HCT116 (cell line): ENCODE measurements at regions of chr2 and their contacts with region 1.

Region 1: GRCh38 chr2:70104231-70105111 is 17.2 kb downstream of the PCBP1 start:
- DNase-seq: no peak
- ATAC-seq: no peak
- H3K4me3 ChIP-seq: peak overlapping the region in 1 of 2 experiments; percentile 8; a peak in 1 of 4 replicates
- H3K27ac ChIP-seq: peak overlapping the region; percentile 61
- H3K4me1 ChIP-seq: peaks cover 39 to 58% of the 10 kb centered on the region in 2 experiments
- H3K27me3 ChIP-seq: no peaks in the 10 kb centered on the region
- CTCF ChIP-seq: no peak
- POLR2A ChIP-seq: no peak
- RAD21 ChIP-seq: no peak; the same call in 1 of the 2 replicates

Region 2: GRCh38 chr2:70118798-70119469 is 14.5 kb after region 1 on chr2:
- CTCF ChIA-PET with region 1: no interaction called
- POLR2A ChIA-PET with region 1: interaction called, 13 read pairs
- RAD21 ChIA-PET with region 1: no interaction called
- intact Hi-C with region 1: no loop called
- DNase-seq: no peak
- ATAC-seq: peak; percentile 74
- H3K4me3 ChIP-seq: no peak overlapping the region
- H3K27ac ChIP-seq: no peak overlapping the region; the same call in 1 of the 2 replicates
- H3K4me1 ChIP-seq: peaks cover 21 to 30% of the 10 kb centered on the region in 2 experiments
- H3K27me3 ChIP-seq: no peaks in the 10 kb centered on the region
- CTCF ChIP-seq: no peak
- POLR2A ChIP-seq: no peak
- RAD21 ChIP-seq: no peak